GM10248 (cell line): ENCODE measurements at regions of chr11 and their contacts with region 1.

Region 1: GRCh38 chr11:727859-728748 is 19.2 kb upstream of the TALDO1 start:
- DNase-seq: peak; percentile 93
- CTCF ChIP-seq: peak; percentile 99

Region 2: GRCh38 chr11:554824-555472 is 173.2 kb before region 1 on chr11:
- CTCF ChIA-PET with region 1: interaction called, 71 read pairs
- POLR2A ChIA-PET with region 1: no interaction called
- DNase-seq: peak; percentile 89
- CTCF ChIP-seq: peak; percentile 90

Region 3: DNA sequence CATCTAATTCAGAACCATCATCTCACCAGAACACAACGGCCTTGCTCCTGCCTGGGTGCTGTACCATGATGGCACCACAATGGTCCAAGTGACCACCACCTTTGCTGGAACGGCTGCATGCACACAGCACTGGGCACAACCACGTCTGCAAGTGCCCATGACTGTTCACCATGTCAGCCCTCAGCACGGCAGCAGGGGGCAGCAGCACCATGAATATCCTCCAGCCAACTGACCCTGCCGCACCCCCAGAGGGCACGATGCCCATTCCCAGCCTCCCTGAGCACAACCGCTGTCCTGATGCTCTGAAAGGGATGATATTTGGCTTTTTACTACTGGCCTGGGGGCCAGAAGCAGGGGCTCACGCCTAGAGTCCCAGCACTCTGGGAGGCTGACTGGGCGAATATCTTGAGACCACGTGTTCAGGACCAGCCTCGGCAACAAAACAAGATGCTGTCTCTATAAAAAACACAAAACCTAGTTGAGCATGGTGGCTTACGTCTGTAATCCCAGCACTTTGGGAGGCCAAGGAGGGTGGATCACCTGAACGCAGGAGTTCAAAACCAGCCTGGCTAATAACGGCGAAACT is 65.3 kb before region 1 on chr11:
- CTCF ChIA-PET with region 1: interaction called, 15 read pairs
- POLR2A ChIA-PET with region 1: no interaction called
- DNase-seq: peak; percentile 75
- CTCF ChIP-seq: peak; percentile 75

Region 4: DNA sequence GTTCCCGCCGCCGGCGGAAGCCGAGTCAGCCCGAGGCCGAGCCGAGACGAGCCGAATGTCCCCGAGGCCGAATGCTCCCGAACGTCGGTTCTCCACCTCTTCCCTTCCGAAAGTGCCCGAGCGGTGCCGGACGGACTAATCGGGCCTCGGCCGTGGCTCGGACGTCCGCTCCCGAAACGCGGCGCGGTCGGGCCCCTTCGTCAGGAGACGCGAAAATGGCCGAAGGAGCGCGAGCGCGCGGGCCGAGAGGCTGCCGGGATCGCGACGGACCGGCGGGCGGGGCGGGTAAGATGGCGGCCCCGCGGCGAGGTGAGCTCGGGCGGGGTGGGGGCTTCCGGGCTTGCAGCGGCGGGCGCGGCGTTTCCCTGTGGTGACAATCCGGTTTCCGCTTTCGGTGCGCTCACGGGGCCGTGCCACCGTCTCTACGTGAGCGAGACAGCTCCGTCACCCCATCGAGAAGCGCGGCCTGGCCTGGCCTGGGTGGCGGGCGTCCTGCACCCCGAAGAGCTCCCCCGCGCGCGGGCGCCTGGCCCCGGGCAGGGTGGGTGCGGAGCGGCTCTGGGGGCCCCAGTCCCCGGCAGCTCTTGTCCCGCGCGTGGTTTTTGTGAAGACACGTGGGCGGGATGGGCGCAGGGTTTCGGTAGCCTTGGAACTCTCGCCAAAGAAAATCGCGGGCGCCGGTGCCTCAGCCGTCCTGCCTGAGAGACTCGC is 32.4 kb before region 1 on chr11 and contains the start of gene TMEM80:
- CTCF ChIA-PET with region 1: interaction called, 47 read pairs
- POLR2A ChIA-PET with region 1: interaction called, 3 read pairs
- DNase-seq: peak; percentile 94
- CTCF ChIP-seq: no peak

Region 5: GRCh38 chr11:706957-707816 is 20.9 kb before region 1 on chr11:
- CTCF ChIA-PET with region 1: interaction called, 16 read pairs
- POLR2A ChIA-PET with region 1: no interaction called
- DNase-seq: peak; percentile 32
- CTCF ChIP-seq: no peak

Region 6: GRCh38 chr11:747158-748006 is 19.3 kb after region 1 on chr11 and contains the start of gene TALDO1:
- CTCF ChIA-PET with region 1: interaction called, 112 read pairs
- POLR2A ChIA-PET with region 1: no interaction called
- DNase-seq: peak; percentile 97
- CTCF ChIP-seq: peak; percentile 28